Endothelial cell of umbilical vein (primary cell): ENCODE measurements at regions of chr11 and their contacts with region 1.

Region 1: DNA sequence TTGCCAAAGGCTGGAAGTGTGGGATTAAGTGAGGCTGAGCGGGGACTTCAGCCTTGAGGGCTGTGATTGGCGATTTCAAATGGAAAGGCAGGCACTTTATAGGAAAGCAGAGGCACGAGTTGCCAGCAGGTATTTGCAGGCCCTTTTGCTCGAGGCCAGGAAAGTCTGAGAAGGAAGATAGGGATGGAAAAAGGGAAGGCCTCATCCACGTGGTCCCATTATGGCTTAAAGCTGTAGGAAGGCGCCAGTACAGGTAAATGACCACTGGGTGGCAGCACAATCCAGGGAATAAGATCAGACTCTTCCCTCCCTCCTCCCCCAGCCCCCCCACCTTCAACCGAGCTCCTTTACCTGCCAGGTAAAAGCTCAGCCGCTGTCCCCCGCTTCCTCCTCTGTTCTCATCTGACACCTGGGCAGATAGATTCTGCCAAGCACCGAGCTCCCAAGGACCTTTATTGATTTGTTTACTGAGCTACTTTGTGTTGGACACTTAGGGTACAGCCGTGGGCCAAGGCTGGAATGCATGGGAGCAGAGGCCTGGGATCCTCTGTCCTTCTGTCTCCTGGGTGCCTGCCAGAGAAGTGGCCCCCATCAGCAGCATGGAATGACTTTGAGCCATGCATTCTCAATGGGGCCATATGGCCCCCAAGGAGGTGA is 7.5 kb downstream of the P2RX3 start:
- DNase-seq: peak; percentile 60
- H3K4me3 ChIP-seq: no peak overlapping the region
- H3K27ac ChIP-seq: no peak overlapping the region
- H3K4me1 ChIP-seq: no peaks in the 10 kb centered on the region
- H3K27me3 ChIP-seq: no peaks in the 10 kb centered on the region
- CTCF ChIP-seq: peak; percentile 49 to 71
- POLR2A ChIP-seq: no peak

Region 2: DNA sequence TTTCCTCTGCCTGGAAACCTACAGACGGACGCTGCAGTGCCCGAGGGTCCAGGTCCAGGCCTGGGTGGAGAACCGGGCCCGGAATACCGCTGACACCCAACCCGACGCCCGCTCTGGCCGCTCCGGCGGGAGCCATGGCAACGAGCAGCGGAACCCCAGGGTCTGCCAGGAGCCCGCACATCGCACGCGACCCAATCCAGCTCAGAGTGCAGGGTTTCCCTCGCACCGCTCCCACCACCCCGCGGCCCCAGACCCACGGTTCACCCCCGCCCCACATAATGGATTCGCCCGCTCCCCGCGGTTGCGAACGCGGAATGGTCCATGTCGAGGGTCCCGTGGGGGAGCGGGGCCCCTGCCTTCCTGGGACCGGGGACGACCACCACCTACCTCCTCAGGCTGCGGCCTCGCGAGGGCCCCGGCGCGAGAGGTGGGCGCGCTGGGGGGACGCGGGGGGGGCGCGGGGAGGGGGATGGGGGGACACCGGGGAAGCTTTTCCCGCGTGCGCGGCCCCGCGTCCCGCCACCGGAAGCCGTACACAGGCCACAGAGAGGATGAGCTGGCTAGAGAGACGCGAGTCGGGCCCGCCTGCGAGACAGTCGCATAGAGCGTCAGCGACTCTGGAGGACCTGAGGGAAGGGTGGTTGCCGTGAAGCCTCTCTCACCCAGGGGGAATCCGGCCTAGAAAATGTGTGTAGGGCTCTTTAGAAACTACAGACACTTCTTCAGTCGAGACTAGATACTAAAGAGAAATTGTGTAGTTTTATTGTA is 10.2 kb before region 1 on chr11 and contains the start of gene SSRP1:
- CTCF ChIA-PET with region 1: interaction called, 10 read pairs
- POLR2A ChIA-PET with region 1: no interaction called
- dilution Hi-C with region 1: no loop called
- intact Hi-C with region 1: no loop called
- DNase-seq: peak; percentile 77
- H3K4me3 ChIP-seq: peak within 1 kb of the TSS; percentile 58 to 82 (median 61)
- H3K27ac ChIP-seq: peak within 1 kb of the TSS; percentile 54
- H3K4me1 ChIP-seq: peaks cover 17% of the 10 kb centered on the region
- H3K27me3 ChIP-seq: peaks cover 4 to 9% of the 10 kb centered on the region in 2 experiments
- CTCF ChIP-seq: no peak
- POLR2A ChIP-seq: peak; percentile 82
- total RNA-seq, gene SSRP1: 140 and 146 TPM in 2 replicates

Region 3: DNA sequence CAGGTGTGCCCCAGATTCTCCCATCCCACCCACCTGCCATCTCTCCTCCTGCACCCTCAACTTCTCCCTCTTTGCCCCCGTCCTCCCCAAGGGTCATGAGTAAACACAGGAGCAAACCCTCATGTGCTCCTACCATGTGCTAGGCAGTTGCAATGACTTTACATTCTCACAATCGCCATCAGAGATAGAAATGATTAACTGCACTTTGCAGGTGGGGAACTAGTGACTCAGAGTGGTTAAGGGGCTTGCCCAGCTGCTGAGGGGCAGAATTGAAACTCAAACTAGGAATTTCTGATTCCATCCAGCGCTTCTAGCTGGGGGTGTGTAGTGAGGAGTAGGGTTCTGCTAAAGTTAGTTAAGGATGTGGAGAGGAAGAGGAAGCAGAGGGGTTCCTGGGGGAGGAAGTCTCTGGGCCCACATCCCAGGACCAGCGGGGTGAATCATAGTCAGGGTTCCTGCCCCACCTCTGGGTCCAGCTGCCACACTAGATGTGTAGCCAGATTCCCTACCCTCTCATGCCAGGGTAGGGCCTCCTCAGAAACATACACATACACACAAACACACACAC is 60.7 kb after region 1 on chr11:
- CTCF ChIA-PET with region 1: interaction called, 5 read pairs
- POLR2A ChIA-PET with region 1: no interaction called
- dilution Hi-C with region 1: no loop called
- intact Hi-C with region 1: loop called (anchors 5 kb)
- DNase-seq: peak; percentile 90
- H3K4me3 ChIP-seq: no peak overlapping the region
- H3K27ac ChIP-seq: peak overlapping the region; percentile 84
- H3K4me1 ChIP-seq: peaks cover 26% of the 10 kb centered on the region
- H3K27me3 ChIP-seq: no peaks in the 10 kb centered on the region
- CTCF ChIP-seq: no peak
- POLR2A ChIP-seq: peak; percentile 28

Region 4: DNA sequence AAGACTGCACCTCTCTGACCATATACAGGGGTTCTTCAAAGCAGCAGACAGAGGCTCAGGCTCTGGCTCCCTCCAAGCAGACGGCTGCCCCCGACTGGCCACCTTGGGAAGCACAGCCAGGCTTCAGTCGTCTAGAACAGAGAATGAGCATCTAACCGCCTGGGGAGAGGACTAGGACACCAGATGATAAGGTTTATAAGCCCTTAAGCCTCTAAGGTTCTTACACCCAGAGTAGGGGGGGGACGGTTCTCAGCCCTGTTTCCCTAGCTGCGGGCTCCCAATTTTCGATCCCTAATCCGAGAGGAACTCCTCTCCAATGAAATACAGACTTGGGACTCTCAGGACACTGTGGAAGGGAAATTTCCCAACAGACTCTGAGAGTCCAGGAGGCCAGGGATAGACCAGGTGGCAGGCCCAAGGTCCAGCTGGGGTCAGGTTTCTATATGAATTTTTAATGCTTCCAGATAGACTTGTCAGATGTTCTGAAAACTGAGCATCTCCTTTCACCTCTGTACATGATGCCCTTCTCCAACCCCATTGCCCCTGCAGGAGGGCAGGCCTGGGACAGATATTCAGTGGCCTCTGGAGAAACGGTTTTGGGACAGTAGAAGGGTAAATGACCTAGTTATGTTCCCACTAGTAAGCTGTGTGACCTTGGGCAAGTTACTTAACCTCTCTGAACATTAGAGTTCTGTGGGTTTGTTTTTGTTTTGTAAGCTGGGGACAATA is 134.9 kb after region 1 on chr11:
- CTCF ChIA-PET with region 1: interaction called, 55 read pairs
- POLR2A ChIA-PET with region 1: no interaction called
- dilution Hi-C with region 1: no loop called
- intact Hi-C with region 1: loop called (anchors 1 kb)
- DNase-seq: peak; percentile 46
- H3K4me3 ChIP-seq: no peak overlapping the region
- H3K27ac ChIP-seq: no peak overlapping the region
- H3K4me1 ChIP-seq: peaks cover 9% of the 10 kb centered on the region
- H3K27me3 ChIP-seq: peaks cover 7 to 28% of the 10 kb centered on the region in 2 experiments
- CTCF ChIP-seq: peak; percentile 75 to 85
- POLR2A ChIP-seq: no peak

Region 5: DNA sequence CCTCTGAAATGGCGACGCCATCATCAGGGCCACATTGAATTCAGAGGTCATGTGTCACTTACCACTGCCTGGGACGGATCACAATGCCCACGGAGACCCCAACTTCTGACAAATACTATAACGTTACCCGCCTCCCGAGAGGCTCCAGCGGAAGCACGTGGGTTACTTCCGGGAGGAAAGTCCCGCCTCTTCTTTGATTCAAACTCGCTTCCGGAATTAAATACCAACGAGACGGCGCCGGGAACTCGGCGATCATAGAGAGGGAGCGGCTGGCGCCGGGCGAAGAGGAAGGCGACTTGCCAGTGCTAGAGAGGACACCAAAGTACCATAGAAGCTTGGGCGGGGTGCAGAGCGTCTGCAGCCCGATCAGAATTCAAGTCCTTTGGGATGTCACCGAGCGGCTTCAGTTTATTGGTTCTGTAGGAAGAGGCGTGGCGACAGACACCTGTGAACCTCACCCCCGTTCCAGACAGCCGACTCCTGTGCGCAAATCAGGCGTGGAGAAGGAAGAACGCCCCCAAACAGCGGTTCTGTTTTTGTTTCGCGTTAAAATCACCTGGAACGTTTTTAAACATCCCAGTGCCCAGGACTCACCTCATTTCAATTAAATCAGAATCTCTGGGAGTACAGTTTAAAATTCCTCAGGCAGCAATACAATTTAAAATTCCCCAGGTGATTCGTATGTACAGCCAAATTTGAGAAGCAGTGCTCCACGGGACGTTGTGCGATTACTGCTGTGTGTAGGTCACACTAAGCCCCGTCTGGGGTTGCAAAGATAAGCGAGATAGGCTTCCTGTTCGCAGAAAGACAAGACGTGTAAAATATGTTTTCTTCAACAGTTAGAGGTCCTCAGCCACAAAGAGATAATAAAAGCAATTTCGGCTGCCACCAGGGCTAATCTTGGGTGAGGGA is 185.2 kb after region 1 on chr11 and contains the start of gene TIMM10:
- CTCF ChIA-PET with region 1: interaction called, 23 read pairs
- POLR2A ChIA-PET with region 1: no interaction called
- dilution Hi-C with region 1: no loop called
- intact Hi-C with region 1: loop called (anchors 1 kb)
- DNase-seq: peak; percentile 96
- H3K4me3 ChIP-seq: peak within 1 kb of the TSS; percentile 53 to 74 (median 69)
- H3K27ac ChIP-seq: peak within 1 kb of the TSS; percentile 48
- H3K4me1 ChIP-seq: peaks cover 21% of the 10 kb centered on the region
- H3K27me3 ChIP-seq: peaks cover 0 to 2% of the 10 kb centered on the region in 2 experiments
- CTCF ChIP-seq: no peak
- POLR2A ChIP-seq: peak; percentile 45
- total RNA-seq, gene TIMM10: 64.2 and 105 TPM in 2 replicates

Region 6: GRCh38 chr11:57644748-57645688 is 299.3 kb after region 1 on chr11:
- CTCF ChIA-PET with region 1: interaction called, 36 read pairs
- POLR2A ChIA-PET with region 1: no interaction called
- dilution Hi-C with region 1: no loop called
- intact Hi-C with region 1: loop called (anchors 1 kb)
- DNase-seq: peak; percentile 68
- H3K4me3 ChIP-seq: no peak overlapping the region
- H3K27ac ChIP-seq: no peak overlapping the region
- H3K4me1 ChIP-seq: peaks cover 14% of the 10 kb centered on the region
- H3K27me3 ChIP-seq: peaks cover 38 to 44% of the 10 kb centered on the region in 2 experiments
- CTCF ChIP-seq: peak; percentile 78 to 86
- POLR2A ChIP-seq: no peak